Keratinocyte (primary cell): ENCODE measurements at regions of chr9 and their contacts with region 1.

Region 1: GRCh38 chr9:110058304-110058953 is 149.5 kb downstream of the C9orf152 start:
- DNase-seq: no peak
- H3K4me3 ChIP-seq: no peak overlapping the region
- H3K27ac ChIP-seq: no peak overlapping the region
- H3K4me1 ChIP-seq: no peaks in the 10 kb centered on the region
- H3K27me3 ChIP-seq: no peaks in the 10 kb centered on the region
- CTCF ChIP-seq: peak; percentile 70 to 86 (median 80)

Region 2: GRCh38 chr9:109903515-109904138 is 154.8 kb before region 1 on chr9:
- dilution Hi-C with region 1: loop called (anchors 25 kb)
- DNase-seq: peak; percentile 48
- H3K4me3 ChIP-seq: no peak overlapping the region
- H3K27ac ChIP-seq: no peak overlapping the region
- H3K4me1 ChIP-seq: peaks cover 8% of the 10 kb centered on the region
- H3K27me3 ChIP-seq: no peaks in the 10 kb centered on the region
- CTCF ChIP-seq: peak; percentile 59 to 94 (median 89)